Activated CD4-positive, alpha-beta T cell treated with anti-CD3 and anti-CD28 coated beads, Interleukin-2, amount 10 ng/mL, durations not matched to agents 7 days and 5 days (primary cell): ENCODE measurements at regions of chr12 and their contacts with region 1.

Region 1: GRCh38 chr12:12562585-12563261 is at the start of gene DUSP16:
- DNase-seq: peak; percentile 88
- H3K4me3 Mint-ChIP-seq: peak within 1 kb of the TSS; percentile 85
- H3K27ac Mint-ChIP-seq: peak within 1 kb of the TSS; percentile 96
- H3K4me1 Mint-ChIP-seq: peaks cover 40% of the 10 kb centered on the region
- H3K27me3 Mint-ChIP-seq: peaks cover 3% of the 10 kb centered on the region
- total RNA-seq, gene DUSP16: 33.6 to 35.9 TPM

Region 2: GRCh38 chr12:12577786-12578185 is 15.1 kb after region 1 on chr12:
- CTCF ChIA-PET with region 1: interaction called, 10 read pairs
- POLR2A ChIA-PET with region 1: no interaction called
- DNase-seq: no peak
- H3K4me3 Mint-ChIP-seq: no peak overlapping the region
- H3K27ac Mint-ChIP-seq: no peak overlapping the region
- H3K4me1 Mint-ChIP-seq: peaks cover 10% of the 10 kb centered on the region
- H3K27me3 Mint-ChIP-seq: no peaks in the 10 kb centered on the region